ENCODE measurements at regions of chr10 and their contacts with region 1.

Region 1: GRCh38 chr10:31864834-31865518 is 63.7 kb downstream of the ARHGAP12 start:
- DNase-seq: peak in 1 of 2 experiments; percentile 26
- H3K4me3 ChIP-seq: no peak overlapping the region
- H3K4me3 Mint-ChIP-seq: peak overlapping the region; percentile 9
- H3K27ac Mint-ChIP-seq: peak overlapping the region; percentile 5
- H3K4me1 ChIP-seq: peaks cover 24% of the 10 kb centered on the region
- H3K4me1 Mint-ChIP-seq: peaks cover 37% of the 10 kb centered on the region
- H3K27me3 ChIP-seq: no peaks in the 10 kb centered on the region
- H3K27me3 Mint-ChIP-seq: no peaks in the 10 kb centered on the region
- CTCF ChIP-seq: no peak

Region 2: GRCh38 chr10:31888442-31888841 is 23.5 kb after region 1 on chr10:
- CTCF ChIA-PET with region 1: interaction called, 3 read pairs
- POLR2A ChIA-PET with region 1: no interaction called
- intact Hi-C with region 1: loop called (anchors 2 kb)
- DNase-seq: peak in 1 of 2 experiments; percentile 40
- H3K4me3 ChIP-seq: no peak overlapping the region
- H3K4me3 Mint-ChIP-seq: peak overlapping the region; percentile 59
- H3K27ac Mint-ChIP-seq: peak overlapping the region; percentile 84
- H3K4me1 ChIP-seq: peaks cover 50% of the 10 kb centered on the region
- H3K4me1 Mint-ChIP-seq: peaks cover 44% of the 10 kb centered on the region
- H3K27me3 ChIP-seq: no peaks in the 10 kb centered on the region
- H3K27me3 Mint-ChIP-seq: no peaks in the 10 kb centered on the region
- CTCF ChIP-seq: no peak

Region 3: GRCh38 chr10:31928549-31929260 is 63.7 kb after region 1 on chr10 and contains the start of gene ARHGAP12:
- CTCF ChIA-PET with region 1: interaction called, 18 read pairs
- POLR2A ChIA-PET with region 1: interaction called, 8 read pairs
- intact Hi-C with region 1: loop called (anchors 1 kb)
- DNase-seq: peak; percentile 95 to 99
- H3K4me3 ChIP-seq: peak within 1 kb of the TSS; percentile 80
- H3K4me3 Mint-ChIP-seq: peak within 1 kb of the TSS; percentile 76
- H3K27ac Mint-ChIP-seq: peak within 1 kb of the TSS; percentile 97
- H3K4me1 ChIP-seq: peaks cover 12% of the 10 kb centered on the region; the same call in 1 of the 2 replicates
- H3K4me1 Mint-ChIP-seq: peaks cover 40% of the 10 kb centered on the region
- H3K27me3 ChIP-seq: no peaks in the 10 kb centered on the region
- H3K27me3 Mint-ChIP-seq: no peaks in the 10 kb centered on the region
- CTCF ChIP-seq: no peak
- total RNA-seq, gene ARHGAP12: 62.3 and 63.1 TPM in 2 replicates

Region 4: GRCh38 chr10:31947144-31947926 is 82.4 kb after region 1 on chr10:
- CTCF ChIA-PET with region 1: interaction called, 28 read pairs
- POLR2A ChIA-PET with region 1: no interaction called
- intact Hi-C with region 1: loop called (anchors 1 kb)
- DNase-seq: peak; percentile 74 to 84
- H3K4me3 ChIP-seq: peak overlapping the region; percentile 10
- H3K4me3 Mint-ChIP-seq: peak overlapping the region; percentile 65
- H3K27ac Mint-ChIP-seq: peak overlapping the region; percentile 70
- H3K4me1 ChIP-seq: peaks cover 42% of the 10 kb centered on the region
- H3K4me1 Mint-ChIP-seq: peaks cover 26% of the 10 kb centered on the region
- H3K27me3 ChIP-seq: no peaks in the 10 kb centered on the region
- H3K27me3 Mint-ChIP-seq: no peaks in the 10 kb centered on the region
- CTCF ChIP-seq: peak; percentile 47 to 82

Region 5: DNA sequence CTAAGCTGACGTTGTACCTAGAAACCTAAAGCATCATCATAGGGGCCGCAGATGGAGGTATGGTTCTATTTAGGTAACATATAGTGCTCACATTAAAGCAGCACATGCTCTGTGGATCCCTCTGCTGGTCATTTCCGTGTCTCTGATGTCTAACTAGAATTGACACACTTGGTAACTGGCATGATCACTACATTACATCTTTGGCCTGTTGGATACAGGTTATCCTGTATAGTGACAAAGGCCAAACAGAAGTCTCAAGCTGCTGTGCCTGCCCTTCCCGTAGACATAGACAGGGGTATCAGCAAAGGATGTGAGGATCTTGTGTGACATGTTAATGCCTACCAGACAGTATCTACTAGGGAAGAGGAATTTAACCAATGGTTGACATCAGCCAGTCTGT is 140.1 kb after region 1 on chr10:
- CTCF ChIA-PET with region 1: interaction called, 15 read pairs
- POLR2A ChIA-PET with region 1: no interaction called
- intact Hi-C with region 1: loop called (anchors 1 kb)
- DNase-seq: peak; percentile 68 to 73
- H3K4me3 ChIP-seq: no peak overlapping the region
- H3K4me3 Mint-ChIP-seq: no peak overlapping the region
- H3K27ac Mint-ChIP-seq: no peak overlapping the region
- H3K4me1 ChIP-seq: no peaks in the 10 kb centered on the region; the same call in 1 of the 2 replicates
- H3K4me1 Mint-ChIP-seq: peaks cover 21% of the 10 kb centered on the region
- H3K27me3 ChIP-seq: no peaks in the 10 kb centered on the region
- H3K27me3 Mint-ChIP-seq: no peaks in the 10 kb centered on the region
- CTCF ChIP-seq: peak; percentile 78 to 83

Region 6: DNA sequence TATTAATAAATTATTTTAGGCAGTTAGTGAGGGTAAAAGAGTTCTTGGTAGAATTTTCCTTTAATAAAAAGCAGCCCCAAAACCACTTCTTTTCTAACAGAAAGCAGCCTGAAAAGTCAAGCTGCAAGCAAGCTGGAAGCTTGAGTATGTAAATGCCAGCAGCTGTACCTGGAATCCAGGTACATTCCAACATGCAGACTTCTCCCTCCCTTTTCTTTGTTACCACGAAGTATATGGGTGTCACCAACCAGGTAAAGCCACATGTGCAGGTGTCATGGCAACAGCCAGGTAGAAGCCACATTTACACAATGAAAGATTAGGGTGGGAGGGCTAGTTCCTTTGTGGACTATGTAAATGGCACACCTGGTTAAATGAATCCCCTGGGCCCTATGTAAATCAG is 367.4 kb after region 1 on chr10:
- CTCF ChIA-PET with region 1: no interaction called
- POLR2A ChIA-PET with region 1: no interaction called
- intact Hi-C with region 1: no loop called
- DNase-seq: peak; percentile 56 to 64
- H3K4me3 ChIP-seq: no peak overlapping the region
- H3K4me3 Mint-ChIP-seq: no peak overlapping the region
- H3K27ac Mint-ChIP-seq: no peak overlapping the region
- H3K4me1 ChIP-seq: no peaks in the 10 kb centered on the region; the same call in 1 of the 2 replicates
- H3K4me1 Mint-ChIP-seq: no peaks in the 10 kb centered on the region
- H3K27me3 ChIP-seq: no peaks in the 10 kb centered on the region
- H3K27me3 Mint-ChIP-seq: no peaks in the 10 kb centered on the region
- CTCF ChIP-seq: no peak

Measured in Caco-2 (cell line).